Panc1 (cell line): ENCODE measurements at regions of chr13 and their contacts with region 1.

Region 1: GRCh38 chr13:80083853-80084676 is 256.9 kb downstream of the SPRY2 start:
- DNase-seq: peak; percentile 12
- ATAC-seq: no peak
- H3K4me3 ChIP-seq: no peak overlapping the region
- H3K27ac ChIP-seq: peak overlapping the region; percentile 69
- H3K4me1 ChIP-seq: peaks cover 15% of the 10 kb centered on the region
- H3K27me3 ChIP-seq: no peaks in the 10 kb centered on the region
- CTCF ChIP-seq: no peak

Region 2: GRCh38 chr13:79966493-79966895 is 117.6 kb before region 1 on chr13:
- CTCF ChIA-PET with region 1: no interaction called
- POLR2A ChIA-PET with region 1: no interaction called
- in situ Hi-C with region 1: no loop called
- intact Hi-C with region 1: no loop called
- DNase-seq: no peak
- ATAC-seq: peak; percentile 72; the same call in 1 of the 2 replicates
- H3K4me3 ChIP-seq: no peak overlapping the region
- H3K27ac ChIP-seq: peak overlapping the region; percentile 48; the same call in 1 of the 2 replicates
- H3K4me1 ChIP-seq: peaks cover 3% of the 10 kb centered on the region; the same call in 1 of the 2 replicates
- H3K27me3 ChIP-seq: no peaks in the 10 kb centered on the region
- CTCF ChIP-seq: no peak

Region 3: GRCh38 chr13:80284290-80284689 is 200.2 kb after region 1 on chr13:
- CTCF ChIA-PET with region 1: no interaction called
- POLR2A ChIA-PET with region 1: no interaction called
- in situ Hi-C with region 1: no loop called
- intact Hi-C with region 1: no loop called
- DNase-seq: no peak
- ATAC-seq: no peak
- H3K4me3 ChIP-seq: no peak overlapping the region
- H3K27ac ChIP-seq: no peak overlapping the region
- H3K4me1 ChIP-seq: no peaks in the 10 kb centered on the region
- H3K27me3 ChIP-seq: no peaks in the 10 kb centered on the region
- CTCF ChIP-seq: no peak

Region 4: DNA sequence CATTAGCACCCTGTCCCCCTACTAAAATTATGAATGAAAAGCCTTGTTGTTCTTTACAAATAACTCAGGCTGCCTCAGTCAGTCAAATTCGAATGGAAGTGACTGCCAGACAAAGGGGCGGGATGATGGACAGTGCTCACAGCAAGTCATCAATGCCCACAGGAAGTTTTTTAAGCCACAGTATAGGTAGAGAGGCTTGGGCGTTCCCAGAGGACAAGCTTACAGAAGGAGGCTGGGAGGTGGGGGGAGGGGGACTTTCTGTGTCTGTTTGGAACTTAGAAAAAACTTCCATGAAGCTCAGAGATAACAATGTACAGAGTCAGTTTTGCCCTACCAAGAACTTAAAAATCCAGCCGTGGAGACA is 275.3 kb after region 1 on chr13:
- CTCF ChIA-PET with region 1: no interaction called
- POLR2A ChIA-PET with region 1: interaction called, 11 read pairs
- in situ Hi-C with region 1: no loop called
- intact Hi-C with region 1: no loop called
- DNase-seq: no peak
- ATAC-seq: peak; percentile 77
- H3K4me3 ChIP-seq: peak overlapping the region in 1 of 2 experiments; percentile 26; a peak in 1 of 4 replicates
- H3K27ac ChIP-seq: peak overlapping the region; percentile 69
- H3K4me1 ChIP-seq: peaks cover 24% of the 10 kb centered on the region
- H3K27me3 ChIP-seq: no peaks in the 10 kb centered on the region
- CTCF ChIP-seq: no peak